B cell (primary cell): ENCODE measurements at regions of chr14 and their contacts with region 1.

Region 1: GRCh38 chr14:61568572-61569131 is 126.7 kb upstream of the HIF1A start:
- DNase-seq: peak; percentile 94
- ATAC-seq: peak; percentile 92
- H3K4me3 ChIP-seq: peak overlapping the region; percentile 31 to 58 (median 42)
- H3K4me3 Mint-ChIP-seq: peak overlapping the region; percentile 84
- H3K27ac ChIP-seq: peak overlapping the region; percentile 77 to 91
- H3K27ac Mint-ChIP-seq: peak overlapping the region; percentile 93
- H3K4me1 ChIP-seq: peaks cover 41 to 48% of the 10 kb centered on the region in 2 donors
- H3K4me1 Mint-ChIP-seq: peaks cover 57% of the 10 kb centered on the region
- H3K27me3 ChIP-seq: no peaks in the 10 kb centered on the region
- H3K27me3 Mint-ChIP-seq: no peaks in the 10 kb centered on the region
- CTCF ChIP-seq: peak; percentile 31

Region 2: DNA sequence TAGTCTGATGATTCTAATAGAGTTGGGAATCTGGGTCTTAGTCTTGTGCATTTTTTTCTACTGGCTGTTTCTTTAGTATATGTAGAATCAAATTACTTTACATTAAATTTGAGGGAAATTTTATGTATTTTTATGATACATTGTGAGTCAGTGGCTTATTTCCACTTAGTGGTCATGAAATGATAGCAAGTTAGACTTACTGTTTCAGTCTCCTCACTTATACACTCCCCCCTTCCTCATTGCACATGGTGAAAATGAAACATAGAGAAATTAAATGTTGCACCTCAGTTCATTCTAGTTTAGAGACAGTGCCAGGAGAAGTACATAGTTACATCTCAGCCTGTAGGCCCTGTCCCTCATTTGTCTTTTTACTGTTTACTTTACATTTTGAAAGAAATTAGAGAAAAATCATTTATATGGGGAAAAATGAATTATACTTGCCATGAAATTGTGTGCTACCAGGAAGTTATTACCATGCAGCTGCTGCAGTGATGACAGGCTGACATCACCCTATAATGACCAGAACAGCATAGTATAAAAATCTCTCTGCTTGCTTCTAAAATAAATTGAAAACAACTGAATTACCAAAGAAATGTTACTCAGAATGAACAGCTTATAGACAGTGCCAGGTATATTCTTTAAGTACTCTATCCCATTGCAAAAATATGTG is 701.0 kb before region 1 on chr14:
- CTCF ChIA-PET with region 1: no interaction called
- POLR2A ChIA-PET with region 1: no interaction called
- intact Hi-C with region 1: no loop called
- DNase-seq: no peak
- ATAC-seq: no peak
- H3K4me3 ChIP-seq: no peak overlapping the region
- H3K4me3 Mint-ChIP-seq: no peak overlapping the region
- H3K27ac ChIP-seq: no peak overlapping the region
- H3K27ac Mint-ChIP-seq: no peak overlapping the region
- H3K4me1 ChIP-seq: no peaks in the 10 kb centered on the region
- H3K4me1 Mint-ChIP-seq: no peaks in the 10 kb centered on the region
- H3K27me3 ChIP-seq: no peaks in the 10 kb centered on the region
- H3K27me3 Mint-ChIP-seq: no peaks in the 10 kb centered on the region
- CTCF ChIP-seq: no peak

Region 3: GRCh38 chr14:61609191-61609843 is 40.7 kb after region 1 on chr14:
- CTCF ChIA-PET with region 1: no interaction called
- POLR2A ChIA-PET with region 1: interaction called, 3 read pairs
- intact Hi-C with region 1: loop called (anchors 5 kb)
- DNase-seq: no peak
- ATAC-seq: no peak
- H3K4me3 ChIP-seq: no peak overlapping the region
- H3K4me3 Mint-ChIP-seq: no peak overlapping the region
- H3K27ac ChIP-seq: no peak overlapping the region
- H3K27ac Mint-ChIP-seq: no peak overlapping the region
- H3K4me1 ChIP-seq: peaks cover 5 to 11% of the 10 kb centered on the region in 2 donors
- H3K4me1 Mint-ChIP-seq: peaks cover 9% of the 10 kb centered on the region
- H3K27me3 ChIP-seq: no peaks in the 10 kb centered on the region
- H3K27me3 Mint-ChIP-seq: no peaks in the 10 kb centered on the region
- CTCF ChIP-seq: no peak

Region 4: GRCh38 chr14:61694830-61695694 is 126.4 kb after region 1 on chr14 and contains the start of gene HIF1A:
- CTCF ChIA-PET with region 1: interaction called, 6 read pairs
- POLR2A ChIA-PET with region 1: interaction called, 16 read pairs
- intact Hi-C with region 1: loop called (anchors 1 kb)
- DNase-seq: peak; percentile 99
- ATAC-seq: peak; percentile 94
- H3K4me3 ChIP-seq: peak within 1 kb of the TSS; percentile 92 to 98 (median 94)
- H3K4me3 Mint-ChIP-seq: peak within 1 kb of the TSS; percentile 97
- H3K27ac ChIP-seq: peak within 1 kb of the TSS; percentile 92 to 94
- H3K27ac Mint-ChIP-seq: peak within 1 kb of the TSS; percentile 97
- H3K4me1 ChIP-seq: peaks cover 20 to 35% of the 10 kb centered on the region in 2 donors
- H3K4me1 Mint-ChIP-seq: peaks cover 35% of the 10 kb centered on the region
- H3K27me3 ChIP-seq: no peaks in the 10 kb centered on the region
- H3K27me3 Mint-ChIP-seq: no peaks in the 10 kb centered on the region
- CTCF ChIP-seq: no peak
- total RNA-seq, gene HIF1A: 261 and 264 TPM in 2 replicates

Region 5: GRCh38 chr14:61730756-61731373 is 162.2 kb after region 1 on chr14:
- CTCF ChIA-PET with region 1: interaction called, 12 read pairs
- POLR2A ChIA-PET with region 1: no interaction called
- intact Hi-C with region 1: no loop called
- DNase-seq: peak; percentile 51
- ATAC-seq: no peak
- H3K4me3 ChIP-seq: no peak overlapping the region
- H3K4me3 Mint-ChIP-seq: no peak overlapping the region
- H3K27ac ChIP-seq: peak overlapping the region in 1 of 2 donors; percentile 50
- H3K27ac Mint-ChIP-seq: peak overlapping the region; percentile 68
- H3K4me1 ChIP-seq: peaks cover 12% of the 10 kb centered on the region in 2 donors
- H3K4me1 Mint-ChIP-seq: peaks cover 42% of the 10 kb centered on the region
- H3K27me3 ChIP-seq: no peaks in the 10 kb centered on the region
- H3K27me3 Mint-ChIP-seq: no peaks in the 10 kb centered on the region
- CTCF ChIP-seq: peak; percentile 68